Ascending aorta (tissue), 2 donors: ENCODE measurements at regions of chr17 and their contacts with region 1.

Region 1: DNA sequence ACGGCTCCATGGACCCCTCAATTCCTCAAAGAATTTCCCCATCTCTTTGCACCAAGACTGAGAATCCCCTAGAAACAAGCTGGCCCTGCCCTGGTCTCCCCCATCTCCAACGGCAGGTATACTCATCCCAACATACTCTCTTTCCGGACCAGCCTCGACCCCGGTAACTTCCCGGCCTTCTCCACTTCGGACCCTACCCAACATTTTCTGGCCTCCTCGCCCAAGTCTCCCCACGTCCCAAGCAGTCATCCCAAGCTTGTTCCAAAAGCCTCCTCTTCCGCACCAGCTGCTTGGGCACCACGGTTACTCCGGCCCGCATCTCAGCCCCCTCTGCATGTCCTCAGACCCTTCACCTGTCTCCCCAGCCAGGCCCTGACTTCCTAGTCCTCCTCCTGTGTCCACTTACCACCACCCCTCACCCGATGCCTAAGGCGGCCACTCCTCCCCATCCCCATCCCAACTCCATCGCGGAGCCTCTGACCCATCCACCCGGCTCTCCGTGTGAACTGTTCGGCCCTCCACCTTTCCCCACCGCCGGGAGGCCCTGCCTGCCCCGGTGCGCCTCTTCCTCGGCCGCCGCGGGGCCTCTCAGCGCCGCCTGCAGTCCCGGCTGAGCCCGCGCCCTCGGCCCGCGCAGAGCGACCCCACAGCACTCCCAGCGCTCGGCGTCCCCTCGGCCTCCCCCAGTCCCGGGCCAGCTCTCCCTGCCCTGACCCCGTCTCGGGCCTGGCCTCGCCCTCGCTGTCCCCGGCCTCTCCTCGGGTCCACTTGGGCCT is 1.0 kb downstream of the PITPNA start:
- DNase-seq: no peak
- H3K4me3 ChIP-seq: peak overlapping the region; percentile 97 to 98
- H3K27ac ChIP-seq: peak overlapping the region; percentile 89 to 91
- H3K4me1 ChIP-seq: peaks cover 7 to 17% of the 10 kb centered on the region in 2 donors
- H3K27me3 ChIP-seq: no peaks in the 10 kb centered on the region
- CTCF ChIP-seq: peak; percentile 16 to 46 (median 17)

Region 2: DNA sequence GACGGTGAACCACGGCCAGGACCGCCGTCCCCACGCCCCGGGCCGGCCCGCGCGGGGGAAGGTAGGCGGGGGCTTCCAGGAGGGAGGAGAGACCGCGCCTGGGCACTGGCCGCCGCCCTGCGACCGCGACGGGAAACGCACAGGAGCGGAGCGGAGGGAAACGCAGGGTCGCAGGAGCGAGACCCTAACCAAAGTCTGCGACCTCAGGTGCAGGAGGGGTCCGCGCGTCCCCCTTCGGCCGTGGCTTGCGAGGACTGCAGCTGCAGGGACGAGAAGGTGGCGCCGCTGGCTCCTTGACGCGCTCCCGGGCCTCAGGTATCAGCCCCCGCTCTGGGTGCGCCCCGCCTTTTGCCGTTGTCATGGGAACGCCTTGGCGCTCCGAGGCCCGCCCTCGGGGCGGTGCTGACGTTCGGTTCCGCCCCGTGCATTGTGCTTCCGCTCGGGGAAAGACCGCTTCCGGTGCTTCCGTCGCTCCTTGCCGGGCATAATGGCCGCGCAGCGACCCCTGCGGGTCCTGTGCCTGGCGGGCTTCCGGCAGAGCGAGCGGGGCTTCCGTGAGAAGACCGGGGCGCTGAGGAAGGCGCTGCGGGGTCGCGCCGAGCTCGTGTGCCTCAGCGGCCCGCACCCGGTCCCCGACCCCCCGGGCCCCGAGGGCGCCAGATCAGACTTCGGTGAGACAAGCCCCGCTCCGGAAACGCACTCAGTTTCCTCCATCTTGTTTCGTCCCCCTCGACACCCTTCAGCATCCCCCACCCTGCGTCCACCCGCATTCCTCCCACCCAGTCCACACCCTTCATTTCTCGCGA is 480.2 kb after region 1 on chr17 and contains the start of gene OVCA2:
- intact Hi-C with region 1: loop called (anchors 10 kb)
- DNase-seq: peak; percentile 71 to 96
- H3K4me3 ChIP-seq: peak within 1 kb of the TSS; percentile 74 to 76
- H3K27ac ChIP-seq: peak within 1 kb of the TSS; percentile 81 to 90
- H3K4me1 ChIP-seq: peaks cover 4 to 17% of the 10 kb centered on the region in 2 donors
- H3K27me3 ChIP-seq: no peaks in the 10 kb centered on the region
- CTCF ChIP-seq: peak; percentile 47 to 61 (median 60)
- total RNA-seq, gene OVCA2: 71.3 TPM